ENCODE measurements at regions of chr1 and their contacts with region 1.

Region 1: DNA sequence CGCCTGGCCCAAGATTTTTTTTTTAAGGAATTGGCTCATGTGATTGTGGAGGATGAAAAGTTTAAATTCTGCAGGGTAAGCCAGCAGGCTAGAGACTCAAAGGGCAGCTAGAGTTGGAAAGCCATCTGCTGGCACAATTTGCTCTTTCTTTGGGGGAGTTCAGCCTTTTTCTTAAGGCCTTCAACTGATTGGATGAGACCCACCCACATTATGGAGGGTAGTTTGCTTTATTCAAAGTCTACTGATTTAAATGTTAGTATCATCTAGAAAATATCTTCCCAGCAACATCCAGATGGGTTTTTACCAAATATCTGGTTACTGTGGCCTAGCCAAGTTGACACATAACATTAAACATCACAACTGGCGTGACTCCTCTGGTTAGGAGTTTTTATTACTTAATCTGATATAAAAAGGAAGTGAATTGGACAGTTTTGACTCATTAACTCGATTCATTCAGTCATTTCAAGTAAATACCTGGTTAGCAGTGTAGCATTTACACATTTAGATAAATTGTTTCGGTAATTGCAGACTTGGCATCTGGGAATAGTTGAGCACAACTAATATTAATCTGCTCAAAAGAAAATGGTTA is 12.4 kb downstream of the HOOK1 start:
- DNase-seq: no peak
- H3K4me3 ChIP-seq: no peak overlapping the region
- H3K27ac ChIP-seq: no peak overlapping the region
- H3K4me1 ChIP-seq: no peaks in the 10 kb centered on the region
- H3K27me3 ChIP-seq: no peaks in the 10 kb centered on the region
- CTCF ChIP-seq: no peak
- EP300 ChIP-seq: no peak
- POLR2A ChIP-seq: no peak

Region 2: GRCh38 chr1:59625384-59625783 is 201.8 kb before region 1 on chr1:
- intact Hi-C with region 1: no loop called
- DNase-seq: no peak
- H3K4me3 ChIP-seq: no peak overlapping the region
- H3K27ac ChIP-seq: no peak overlapping the region
- H3K4me1 ChIP-seq: no peaks in the 10 kb centered on the region
- H3K27me3 ChIP-seq: no peaks in the 10 kb centered on the region
- CTCF ChIP-seq: no peak
- EP300 ChIP-seq: no peak
- POLR2A ChIP-seq: no peak

Region 3: GRCh38 chr1:59798600-59798999 is 28.5 kb before region 1 on chr1:
- intact Hi-C with region 1: loop called in 1 of 4 experiments (anchors 2 kb)
- DNase-seq: no peak
- H3K4me3 ChIP-seq: no peak overlapping the region
- H3K27ac ChIP-seq: no peak overlapping the region
- H3K4me1 ChIP-seq: no peaks in the 10 kb centered on the region
- H3K27me3 ChIP-seq: peaks cover 3% of the 10 kb centered on the region
- CTCF ChIP-seq: no peak
- EP300 ChIP-seq: no peak
- POLR2A ChIP-seq: no peak

Measured in ovary (tissue), 10 donors.